ENCODE measurements at regions of chr14 and their contacts with region 1.

Region 1: DNA sequence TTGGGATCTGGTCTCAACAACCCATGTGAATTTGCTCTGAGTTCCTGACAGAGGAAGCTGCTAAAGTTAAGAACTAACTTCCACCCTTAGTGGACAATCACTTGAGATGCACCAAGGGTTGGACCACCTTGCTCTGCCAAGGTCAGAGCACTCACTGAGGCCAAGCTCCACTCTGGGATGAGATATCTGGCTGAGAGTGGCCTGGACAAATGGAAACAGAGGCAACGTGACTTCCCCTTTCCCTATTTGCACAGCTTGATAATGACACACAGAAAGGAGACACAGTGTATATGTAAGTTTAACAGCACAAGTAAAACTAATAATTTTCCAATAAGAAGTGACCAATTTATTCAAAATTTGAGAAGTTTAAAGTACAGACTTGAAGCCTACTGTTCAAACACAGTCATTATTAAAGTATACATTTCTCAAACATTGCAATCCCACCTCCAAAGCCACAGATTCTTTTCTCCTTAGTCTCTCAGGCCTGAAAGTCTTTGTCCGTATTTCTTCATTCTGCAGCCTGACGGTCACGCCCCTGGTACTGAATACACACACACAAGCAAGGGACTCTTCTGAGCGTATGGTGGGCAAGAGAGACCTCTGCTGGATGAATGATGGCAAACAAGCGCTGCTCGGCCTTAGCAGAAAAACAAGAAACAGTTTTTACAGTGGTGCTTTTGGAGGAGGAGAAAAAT is 28.6 kb downstream of the TMEM30B start:
- DNase-seq: no peak
- ATAC-seq: peak; percentile 85
- H3K4me3 Mint-ChIP-seq: no peak overlapping the region
- H3K27ac Mint-ChIP-seq: no peak overlapping the region
- H3K4me1 Mint-ChIP-seq: peaks cover 9% of the 10 kb centered on the region
- H3K27me3 Mint-ChIP-seq: peaks cover 5% of the 10 kb centered on the region
- CTCF ChIP-seq: peak; percentile 43

Region 2: GRCh38 chr14:60622917-60623257 is 629.6 kb before region 1 on chr14:
- CTCF ChIA-PET with region 1: interaction called, 27 read pairs
- POLR2A ChIA-PET with region 1: no interaction called
- intact Hi-C with region 1: loop called (anchors 1 kb)
- DNase-seq: no peak
- ATAC-seq: no peak
- H3K4me3 Mint-ChIP-seq: no peak overlapping the region
- H3K27ac Mint-ChIP-seq: no peak overlapping the region
- H3K4me1 Mint-ChIP-seq: peaks cover 5% of the 10 kb centered on the region
- H3K27me3 Mint-ChIP-seq: peaks cover 17% of the 10 kb centered on the region
- CTCF ChIP-seq: no peak

Region 3: GRCh38 chr14:61234215-61234916 is 18.1 kb before region 1 on chr14:
- CTCF ChIA-PET with region 1: no interaction called
- POLR2A ChIA-PET with region 1: no interaction called
- intact Hi-C with region 1: no loop called
- DNase-seq: no peak
- ATAC-seq: no peak
- H3K4me3 Mint-ChIP-seq: no peak overlapping the region
- H3K27ac Mint-ChIP-seq: no peak overlapping the region
- H3K4me1 Mint-ChIP-seq: no peaks in the 10 kb centered on the region
- H3K27me3 Mint-ChIP-seq: peaks cover 24% of the 10 kb centered on the region
- CTCF ChIP-seq: no peak